ENCODE measurements at regions of chr6 and their contacts with region 1.

Region 1: GRCh38 chr6:73129653-73130443 is 95.4 kb downstream of the KHDC1L start:
- DNase-seq: peak; percentile 89 to 91
- H3K4me3 ChIP-seq: peak overlapping the region in 1 of 4 donors; percentile 5
- H3K27ac ChIP-seq: no peak overlapping the region
- H3K4me1 ChIP-seq: peaks cover 0 to 6% (median 0%) of the 10 kb centered on the region in 4 donors
- H3K27me3 ChIP-seq: no peaks in the 10 kb centered on the region
- CTCF ChIP-seq: peak in 6 of 7 experiments; percentile 34 to 93 (median 86)
- EP300 ChIP-seq: no peak
- POLR2A ChIP-seq: no peak

Region 2: GRCh38 chr6:72411872-72412708 is 717.8 kb before region 1 on chr6:
- intact Hi-C with region 1: loop called (anchors 10 kb)
- DNase-seq: peak; percentile 81 to 91
- H3K4me3 ChIP-seq: no peak overlapping the region
- H3K27ac ChIP-seq: no peak overlapping the region
- H3K4me1 ChIP-seq: no peaks in the 10 kb centered on the region
- H3K27me3 ChIP-seq: peaks cover 0 to 4% (median 0%) of the 10 kb centered on the region in 3 donors
- CTCF ChIP-seq: peak in 6 of 7 experiments; percentile 57 to 100 (median 100)
- EP300 ChIP-seq: no peak
- POLR2A ChIP-seq: no peak

Region 3: GRCh38 chr6:72619883-72620696 is 509.8 kb before region 1 on chr6:
- intact Hi-C with region 1: loop called (anchors 10 kb)
- DNase-seq: peak; percentile 30 to 80
- H3K4me3 ChIP-seq: peak overlapping the region; percentile 52 to 74 (median 61)
- H3K27ac ChIP-seq: peak overlapping the region in 1 of 5 donors; percentile 13
- H3K4me1 ChIP-seq: peaks cover 28 to 44% (median 39%) of the 10 kb centered on the region in 4 donors
- H3K27me3 ChIP-seq: peaks cover 0 to 34% (median 25%) of the 10 kb centered on the region in 3 donors
- CTCF ChIP-seq: no peak
- EP300 ChIP-seq: no peak
- POLR2A ChIP-seq: no peak

Region 4: DNA sequence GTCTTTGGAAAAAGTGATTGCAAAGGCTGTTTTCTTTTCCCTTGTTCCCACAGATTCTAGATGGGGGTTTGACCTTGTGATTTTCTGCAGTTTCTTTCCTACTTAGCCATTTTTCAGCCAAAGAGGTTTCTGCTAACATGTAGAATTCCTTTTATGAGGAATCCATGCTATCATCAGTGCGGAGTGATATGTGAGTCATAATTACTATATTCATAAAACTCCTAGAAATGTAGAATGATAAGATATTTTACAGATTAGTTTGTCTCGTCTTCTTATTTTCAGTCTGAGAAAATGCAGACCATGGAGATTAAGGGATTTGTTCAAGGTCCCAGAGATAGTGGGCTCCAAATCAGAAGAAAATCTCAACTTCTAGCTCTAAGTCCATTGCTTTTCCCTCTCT is 409.4 kb before region 1 on chr6:
- intact Hi-C with region 1: no loop called
- DNase-seq: no peak
- H3K4me3 ChIP-seq: no peak overlapping the region
- H3K27ac ChIP-seq: no peak overlapping the region
- H3K4me1 ChIP-seq: no peaks in the 10 kb centered on the region
- H3K27me3 ChIP-seq: no peaks in the 10 kb centered on the region
- CTCF ChIP-seq: no peak
- EP300 ChIP-seq: no peak
- POLR2A ChIP-seq: no peak

Measured in stomach (tissue), 19 donors.